GM12878 (cell line): ENCODE measurements at regions of chr14 and their contacts with region 1.

Region 1: DNA sequence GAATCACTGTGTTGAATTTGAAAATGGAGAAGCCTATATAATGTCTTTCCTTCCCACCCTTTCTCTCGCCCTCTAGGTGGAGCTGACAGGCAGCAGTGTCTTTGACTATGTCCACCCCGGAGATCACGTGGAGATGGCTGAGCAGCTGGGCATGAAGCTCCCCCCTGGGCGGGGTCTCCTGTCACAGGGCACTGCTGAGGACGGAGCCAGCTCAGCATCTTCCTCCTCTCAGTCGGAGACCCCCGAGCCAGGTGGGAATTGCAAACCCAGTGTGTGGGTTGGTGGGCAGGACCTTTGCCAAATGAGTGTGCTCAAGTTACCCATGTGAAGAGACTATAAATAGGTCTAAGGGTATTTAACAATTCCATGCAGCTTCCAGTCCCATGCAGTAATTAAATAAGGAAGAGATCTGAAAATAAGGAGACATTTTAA is 274.7 kb downstream of the EGLN3 start:
- DNase-seq: no peak
- ATAC-seq: peak; percentile 94
- H3K4me3 ChIP-seq: no peak overlapping the region
- H3K27ac ChIP-seq: no peak overlapping the region
- H3K4me1 ChIP-seq: no peaks in the 10 kb centered on the region
- H3K27me3 ChIP-seq: no peaks in the 10 kb centered on the region
- CTCF ChIP-seq: peak; percentile 14 to 51 (median 31); a peak in 4 of 6 replicates
- EP300 ChIP-seq: no peak
- POLR2A ChIP-seq: no peak
- RAD21 ChIP-seq: 0 out of 2 replicates have a peak, but pooled peaks have one; percentile 15

Region 2: GRCh38 chr14:33534632-33535031 is 141.5 kb before region 1 on chr14:
- CTCF ChIA-PET with region 1: interaction called, 11 read pairs
- POLR2A ChIA-PET with region 1: interaction called, 3 read pairs
- RAD21 ChIA-PET with region 1: interaction called, 12 read pairs
- SMC1A ChIA-PET with region 1: interaction called, 18 read pairs
- in situ Hi-C with region 1: no loop called
- intact Hi-C with region 1: no loop called
- DNase-seq: no peak
- ATAC-seq: no peak
- H3K4me3 ChIP-seq: no peak overlapping the region
- H3K27ac ChIP-seq: no peak overlapping the region
- H3K4me1 ChIP-seq: no peaks in the 10 kb centered on the region
- H3K27me3 ChIP-seq: no peaks in the 10 kb centered on the region
- CTCF ChIP-seq: no peak
- EP300 ChIP-seq: no peak
- POLR2A ChIP-seq: no peak
- RAD21 ChIP-seq: no peak

Region 3: DNA sequence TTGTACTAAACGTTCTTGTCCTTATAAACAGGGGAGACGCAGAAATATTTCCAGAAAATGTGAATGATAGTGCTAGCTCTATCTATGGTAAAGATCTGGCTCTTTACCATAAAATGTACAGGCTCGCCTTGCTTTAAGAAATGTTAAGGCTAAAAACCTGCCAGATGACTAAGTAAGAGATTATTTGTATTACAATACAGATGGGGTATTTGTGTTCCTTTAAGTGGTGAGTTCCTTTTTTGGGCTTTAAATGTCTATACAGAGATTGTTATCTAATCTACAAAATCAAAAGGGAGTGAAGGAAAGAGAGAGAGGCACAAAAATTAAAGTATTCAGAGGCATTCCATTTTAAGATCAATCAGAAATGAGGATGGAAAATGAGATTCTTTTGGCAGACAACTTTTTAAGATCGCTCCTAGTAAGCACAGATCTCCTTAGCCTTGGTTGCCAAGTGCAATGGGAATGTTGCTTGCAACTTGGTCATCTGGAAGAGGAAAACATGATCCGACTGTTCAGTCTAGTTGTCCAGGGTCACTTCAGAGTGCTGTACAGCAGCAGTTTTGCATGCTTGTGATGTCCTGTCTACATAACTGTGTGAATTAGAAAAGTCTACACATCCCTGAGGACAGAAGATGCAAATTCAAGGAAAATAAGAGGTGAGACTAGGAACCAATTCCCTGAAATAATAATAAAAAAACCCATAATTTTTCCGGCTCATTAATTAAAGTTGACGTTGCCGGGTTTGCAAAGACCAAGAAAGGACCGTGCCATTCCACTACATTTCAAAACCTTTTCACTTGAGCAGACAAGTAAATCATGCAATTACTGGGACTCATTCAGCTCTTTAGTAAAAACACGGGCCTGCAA is 106.1 kb before region 1 on chr14:
- CTCF ChIA-PET with region 1: interaction called, 24 read pairs
- POLR2A ChIA-PET with region 1: interaction called, 4 read pairs
- RAD21 ChIA-PET with region 1: interaction called, 58 read pairs
- SMC1A ChIA-PET with region 1: interaction called, 93 read pairs
- in situ Hi-C with region 1: no loop called
- intact Hi-C with region 1: no loop called
- DNase-seq: no peak
- ATAC-seq: no peak
- H3K4me3 ChIP-seq: no peak overlapping the region
- H3K27ac ChIP-seq: no peak overlapping the region
- H3K4me1 ChIP-seq: no peaks in the 10 kb centered on the region
- H3K27me3 ChIP-seq: no peaks in the 10 kb centered on the region
- CTCF ChIP-seq: no peak
- EP300 ChIP-seq: no peak
- POLR2A ChIP-seq: no peak
- RAD21 ChIP-seq: no peak

Region 4: DNA sequence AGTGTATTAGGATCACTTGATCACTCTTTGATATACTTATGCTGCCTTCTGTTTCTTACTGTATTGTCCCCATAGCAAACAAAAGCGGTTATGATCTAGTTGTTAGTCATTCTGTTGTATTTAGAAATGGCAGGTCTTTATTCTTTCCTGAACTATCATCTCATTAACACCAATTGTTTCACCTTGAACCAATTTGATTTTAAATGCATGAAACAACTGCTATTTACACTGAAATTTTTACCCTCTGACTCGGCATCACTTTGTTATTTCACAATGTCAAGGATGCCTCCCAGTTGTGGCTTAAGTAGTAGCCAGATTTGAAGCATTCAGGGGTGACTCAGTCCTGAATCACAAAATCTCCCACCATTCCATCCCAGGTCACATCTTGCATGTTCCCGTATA is 28.8 kb before region 1 on chr14:
- CTCF ChIA-PET with region 1: interaction called, 16 read pairs
- POLR2A ChIA-PET with region 1: interaction called, 3 read pairs
- RAD21 ChIA-PET with region 1: interaction called, 97 read pairs
- SMC1A ChIA-PET with region 1: interaction called, 96 read pairs
- in situ Hi-C with region 1: no loop called
- intact Hi-C with region 1: no loop called
- DNase-seq: no peak
- ATAC-seq: no peak
- H3K4me3 ChIP-seq: no peak overlapping the region
- H3K27ac ChIP-seq: no peak overlapping the region
- H3K4me1 ChIP-seq: no peaks in the 10 kb centered on the region
- H3K27me3 ChIP-seq: no peaks in the 10 kb centered on the region
- CTCF ChIP-seq: no peak
- EP300 ChIP-seq: no peak
- POLR2A ChIP-seq: no peak
- RAD21 ChIP-seq: no peak

Region 5: GRCh38 chr14:33720284-33720787 is 44.2 kb after region 1 on chr14:
- CTCF ChIA-PET with region 1: interaction called, 5 read pairs
- POLR2A ChIA-PET with region 1: no interaction called
- RAD21 ChIA-PET with region 1: interaction called, 29 read pairs
- SMC1A ChIA-PET with region 1: interaction called, 18 read pairs
- in situ Hi-C with region 1: no loop called
- intact Hi-C with region 1: no loop called
- DNase-seq: no peak
- ATAC-seq: no peak
- H3K4me3 ChIP-seq: no peak overlapping the region
- H3K27ac ChIP-seq: no peak overlapping the region
- H3K4me1 ChIP-seq: no peaks in the 10 kb centered on the region
- H3K27me3 ChIP-seq: no peaks in the 10 kb centered on the region; a peak in 1 of 4 replicates
- CTCF ChIP-seq: no peak
- EP300 ChIP-seq: no peak
- POLR2A ChIP-seq: no peak
- RAD21 ChIP-seq: no peak

Region 6: DNA sequence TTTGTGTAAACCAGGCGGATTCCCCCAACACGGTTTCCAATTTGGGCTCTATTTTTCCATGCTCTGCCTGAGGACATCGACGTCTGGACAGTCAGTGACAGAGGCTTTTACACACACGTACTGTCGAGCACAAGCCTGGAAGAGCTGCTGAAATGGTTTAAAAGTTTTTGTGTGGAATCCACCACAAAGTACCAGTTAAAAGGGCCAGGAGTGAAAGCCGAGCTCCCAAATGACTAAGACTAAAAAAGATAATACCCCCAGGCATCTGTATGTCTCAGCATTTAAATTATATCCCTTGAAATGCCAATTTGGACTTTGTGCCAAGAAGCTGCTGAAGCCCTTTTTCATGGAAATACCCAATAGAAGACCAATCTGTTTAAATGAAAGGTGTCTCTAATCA is 101.5 kb after region 1 on chr14:
- CTCF ChIA-PET with region 1: interaction called, 8 read pairs
- POLR2A ChIA-PET with region 1: no interaction called
- RAD21 ChIA-PET with region 1: interaction called, 11 read pairs
- SMC1A ChIA-PET with region 1: interaction called, 4 read pairs
- in situ Hi-C with region 1: no loop called
- intact Hi-C with region 1: no loop called
- DNase-seq: no peak
- ATAC-seq: no peak
- H3K4me3 ChIP-seq: no peak overlapping the region
- H3K27ac ChIP-seq: no peak overlapping the region
- H3K4me1 ChIP-seq: no peaks in the 10 kb centered on the region
- H3K27me3 ChIP-seq: peaks cover 0 to 4% of the 10 kb centered on the region in 2 experiments; a peak in 1 of 4 replicates
- CTCF ChIP-seq: no peak
- EP300 ChIP-seq: no peak
- POLR2A ChIP-seq: no peak
- RAD21 ChIP-seq: no peak